Activated B cell treated with CpG ODN at 0.5 μM for 24 hours (primary cell): ENCODE measurements at regions of chr4 and their contacts with region 1.

Region 1: DNA sequence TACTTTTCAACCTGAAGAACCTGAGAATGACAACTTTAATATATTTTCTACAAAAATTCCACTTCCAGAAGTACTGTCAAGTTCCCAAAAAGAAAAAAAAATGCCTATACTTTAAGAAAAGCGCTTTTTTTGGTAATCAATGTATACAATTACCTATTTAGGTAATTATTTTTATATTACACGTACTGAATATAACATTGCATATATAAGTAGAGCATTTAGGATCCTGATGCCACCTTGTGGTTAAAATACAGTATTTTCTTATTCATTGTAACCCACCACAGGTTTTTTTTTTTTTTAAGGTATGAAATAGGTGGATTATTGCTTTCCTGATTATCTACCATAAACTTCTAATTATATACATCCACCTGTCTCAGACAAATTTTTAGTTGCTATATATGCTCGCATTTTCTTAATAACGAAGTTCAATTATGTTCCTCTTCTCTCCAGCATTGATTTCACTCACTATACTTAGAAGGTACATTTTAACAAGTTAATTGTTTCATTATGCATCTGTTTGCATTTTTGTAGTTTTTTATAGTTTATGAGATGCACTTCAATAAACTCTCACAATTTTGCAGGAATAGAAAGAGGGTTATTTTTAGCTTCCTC is 5.2 kb downstream of the MAP9 start:
- DNase-seq: no peak
- ATAC-seq: no peak
- H3K4me3 Mint-ChIP-seq: no peak overlapping the region
- H3K27ac Mint-ChIP-seq: no peak overlapping the region
- H3K4me1 Mint-ChIP-seq: peaks cover 8% of the 10 kb centered on the region
- H3K27me3 Mint-ChIP-seq: no peaks in the 10 kb centered on the region
- CTCF ChIP-seq: peak; percentile 64

Region 2: DNA sequence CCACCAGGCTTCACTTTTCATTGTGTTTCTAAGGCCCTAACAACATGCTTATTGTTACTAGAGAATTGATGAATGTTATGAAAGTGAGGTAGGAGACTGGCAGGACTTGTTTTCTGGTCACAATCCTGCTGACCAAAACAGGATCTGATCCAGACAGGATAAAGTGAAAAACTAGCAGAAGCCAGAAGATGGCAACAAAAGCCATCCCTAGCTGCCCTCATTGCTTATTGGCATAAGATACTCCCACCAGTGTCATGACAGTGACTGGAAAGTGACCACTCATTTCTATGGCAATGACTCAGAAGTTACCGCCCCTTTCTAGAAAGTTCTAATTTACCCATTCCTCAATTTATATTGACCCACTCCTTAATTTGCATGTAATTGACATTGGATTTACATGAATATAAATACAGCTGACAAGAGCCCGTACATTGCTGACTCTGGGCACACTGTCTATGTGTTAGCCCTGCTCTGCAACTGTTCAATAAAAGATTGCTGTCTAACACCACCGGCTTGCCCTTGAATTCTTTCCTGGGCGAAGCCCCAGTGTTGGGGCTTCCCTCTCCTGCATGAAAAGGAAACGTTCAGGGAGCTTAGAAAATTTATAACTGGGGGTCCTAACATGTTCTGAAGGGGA is 729.0 kb before region 1 on chr4:
- CTCF ChIA-PET with region 1: no interaction called
- POLR2A ChIA-PET with region 1: no interaction called
- intact Hi-C with region 1: loop called (anchors 1 kb)
- DNase-seq: no peak
- ATAC-seq: no peak
- H3K4me3 Mint-ChIP-seq: no peak overlapping the region
- H3K27ac Mint-ChIP-seq: no peak overlapping the region
- H3K4me1 Mint-ChIP-seq: no peaks in the 10 kb centered on the region
- H3K27me3 Mint-ChIP-seq: peaks cover 18% of the 10 kb centered on the region
- CTCF ChIP-seq: no peak

Region 3: DNA sequence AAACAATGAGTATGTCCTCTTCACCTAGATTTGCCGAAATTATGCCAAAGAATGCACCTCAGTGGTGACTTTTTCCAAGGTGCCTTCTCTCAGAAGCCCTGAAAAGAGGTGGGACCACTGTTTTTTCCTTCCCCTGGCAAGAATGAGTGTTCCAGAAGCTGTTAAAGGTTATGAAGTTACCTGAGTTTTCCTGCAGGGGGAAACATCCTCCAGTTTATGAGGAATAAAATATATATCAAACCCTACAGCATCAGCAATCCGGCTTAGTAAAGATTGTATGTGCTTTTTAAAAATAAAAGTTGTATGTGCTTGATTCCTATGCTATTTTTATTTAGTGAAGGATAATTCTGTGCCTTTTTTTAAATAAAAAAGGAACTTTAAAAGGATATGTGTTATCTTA is 517.2 kb before region 1 on chr4:
- CTCF ChIA-PET with region 1: interaction called, 3 read pairs
- POLR2A ChIA-PET with region 1: no interaction called
- intact Hi-C with region 1: loop called (anchors 1 kb)
- DNase-seq: no peak
- ATAC-seq: no peak
- H3K4me3 Mint-ChIP-seq: no peak overlapping the region
- H3K27ac Mint-ChIP-seq: no peak overlapping the region
- H3K4me1 Mint-ChIP-seq: no peaks in the 10 kb centered on the region
- H3K27me3 Mint-ChIP-seq: peaks cover 2% of the 10 kb centered on the region
- CTCF ChIP-seq: no peak

Region 4: GRCh38 chr4:154982187-154983047 is 389.1 kb before region 1 on chr4:
- CTCF ChIA-PET with region 1: interaction called, 3 read pairs
- POLR2A ChIA-PET with region 1: no interaction called
- intact Hi-C with region 1: loop called (anchors 1 kb)
- DNase-seq: no peak
- ATAC-seq: no peak
- H3K4me3 Mint-ChIP-seq: no peak overlapping the region
- H3K27ac Mint-ChIP-seq: no peak overlapping the region
- H3K4me1 Mint-ChIP-seq: no peaks in the 10 kb centered on the region
- H3K27me3 Mint-ChIP-seq: no peaks in the 10 kb centered on the region
- CTCF ChIP-seq: no peak

Region 5: GRCh38 chr4:154998284-154998683 is 373.3 kb before region 1 on chr4:
- CTCF ChIA-PET with region 1: no interaction called
- POLR2A ChIA-PET with region 1: no interaction called
- intact Hi-C with region 1: no loop called
- DNase-seq: no peak
- ATAC-seq: no peak
- H3K4me3 Mint-ChIP-seq: no peak overlapping the region
- H3K27ac Mint-ChIP-seq: no peak overlapping the region
- H3K4me1 Mint-ChIP-seq: no peaks in the 10 kb centered on the region
- H3K27me3 Mint-ChIP-seq: no peaks in the 10 kb centered on the region
- CTCF ChIP-seq: no peak

Region 6: DNA sequence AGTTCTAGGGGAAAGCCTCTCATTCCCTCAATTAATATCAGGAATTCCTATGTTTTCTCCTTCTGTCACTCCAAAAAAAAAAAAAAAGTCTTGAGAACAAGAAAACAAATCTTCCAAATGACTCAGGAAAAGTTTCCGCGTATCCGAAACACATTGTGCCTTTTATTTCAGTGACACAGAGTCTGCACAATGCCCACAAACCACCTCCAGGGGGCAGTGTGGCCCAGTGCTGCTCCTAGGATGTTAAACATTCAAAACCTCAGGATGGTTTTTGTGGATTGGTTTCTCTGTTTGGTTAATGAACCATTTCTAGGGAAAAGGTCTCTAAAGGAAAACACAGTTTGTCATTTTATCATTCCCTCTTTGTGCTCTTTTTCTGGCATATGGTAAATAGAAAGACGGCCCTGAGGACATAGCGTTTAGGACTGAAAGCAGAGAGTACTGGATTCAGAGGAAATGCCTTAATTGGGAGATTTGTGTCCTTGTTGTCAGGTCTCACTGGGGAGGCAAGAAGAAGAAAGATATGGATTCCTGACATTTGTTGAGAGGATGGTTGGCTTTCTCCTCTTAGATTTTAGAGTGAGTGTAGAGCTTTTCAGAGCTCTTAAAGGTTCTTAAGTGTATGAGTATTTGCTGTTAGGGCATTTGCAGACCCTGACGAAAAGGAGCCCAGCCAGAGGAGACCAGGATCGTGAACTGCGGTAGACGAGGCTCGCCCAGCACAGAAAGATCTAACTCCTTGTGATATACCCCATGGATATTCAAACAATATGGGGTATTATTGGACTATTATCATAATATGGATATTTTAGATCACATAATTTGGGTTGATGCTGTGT is 70.9 kb after region 1 on chr4:
- CTCF ChIA-PET with region 1: no interaction called
- POLR2A ChIA-PET with region 1: no interaction called
- intact Hi-C with region 1: no loop called
- DNase-seq: peak; percentile 36
- ATAC-seq: no peak
- H3K4me3 Mint-ChIP-seq: no peak overlapping the region
- H3K27ac Mint-ChIP-seq: no peak overlapping the region
- H3K4me1 Mint-ChIP-seq: no peaks in the 10 kb centered on the region
- H3K27me3 Mint-ChIP-seq: peaks cover 5% of the 10 kb centered on the region
- CTCF ChIP-seq: peak; percentile 46

Region 7: DNA sequence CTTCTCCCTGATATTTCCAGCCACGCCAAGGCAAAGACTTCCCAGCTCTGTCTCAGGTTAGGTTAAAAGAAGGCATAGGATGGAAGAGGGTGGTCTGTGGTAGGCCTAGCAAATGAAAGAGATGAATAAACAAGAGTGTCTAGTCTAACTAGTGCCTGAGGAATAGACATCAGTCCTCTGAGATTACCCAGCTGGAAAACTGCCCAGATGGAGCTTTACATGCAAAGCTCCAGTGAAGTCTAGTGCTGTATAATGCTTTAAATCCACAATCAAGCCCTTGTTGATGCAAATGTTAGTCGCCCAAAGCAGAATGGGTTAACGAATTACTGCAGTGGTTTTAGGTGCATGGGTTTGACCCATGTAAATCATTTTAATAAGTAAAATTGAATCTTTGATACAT is 362.5 kb after region 1 on chr4:
- CTCF ChIA-PET with region 1: no interaction called
- POLR2A ChIA-PET with region 1: no interaction called
- intact Hi-C with region 1: no loop called
- DNase-seq: no peak
- ATAC-seq: no peak
- H3K4me3 Mint-ChIP-seq: no peak overlapping the region
- H3K27ac Mint-ChIP-seq: no peak overlapping the region
- H3K4me1 Mint-ChIP-seq: no peaks in the 10 kb centered on the region
- H3K27me3 Mint-ChIP-seq: no peaks in the 10 kb centered on the region
- CTCF ChIP-seq: no peak